ENCODE measurements at regions of chr9 and their contacts with region 1.

Region 1: DNA sequence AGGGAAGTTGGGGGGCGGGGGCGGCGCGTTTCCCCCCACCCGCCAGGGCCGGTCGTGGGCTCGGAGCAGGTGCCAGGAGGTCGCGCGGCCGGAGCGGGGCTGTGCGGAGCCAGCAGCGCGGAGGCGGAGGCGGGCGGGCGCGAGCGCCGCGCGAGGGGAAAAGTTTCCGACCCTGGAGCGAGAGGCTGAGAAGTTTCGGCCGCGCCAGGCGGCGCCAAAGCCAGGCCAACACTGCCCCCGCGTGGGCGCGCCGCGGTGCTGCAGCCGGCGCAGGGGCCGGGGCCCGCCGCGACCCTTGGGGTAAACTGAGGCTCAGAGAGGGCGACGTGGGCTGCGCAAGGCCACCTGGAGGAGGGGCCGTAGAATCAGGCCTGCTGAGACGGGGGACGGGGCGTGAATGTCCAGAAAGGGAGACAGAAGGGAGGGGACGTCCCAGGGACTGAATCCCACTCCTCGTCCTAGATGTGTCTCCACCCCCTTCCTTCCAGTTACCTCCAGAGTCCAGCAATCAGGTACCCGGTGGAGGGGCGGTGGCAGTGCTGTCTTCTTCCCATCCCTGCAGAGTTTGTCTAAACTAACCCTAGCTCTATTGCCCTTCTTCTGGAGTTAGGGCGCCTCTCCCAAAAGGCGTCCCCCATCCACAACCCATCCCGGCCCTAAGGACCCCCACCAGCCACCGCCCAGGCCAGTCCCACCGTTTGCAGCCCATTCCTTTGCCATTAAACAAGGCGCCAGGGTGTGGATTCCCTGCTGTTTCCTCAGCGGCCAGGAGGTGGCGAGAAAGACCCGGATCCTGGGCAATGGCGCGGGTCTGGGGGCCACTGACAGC is 10.2 kb downstream of the C9orf50 start:
- DNase-seq: peak; percentile 82 to 92 (median 84)
- ATAC-seq: peak in 3 of 4 donors; percentile 12 to 66 (median 54)
- H3K4me3 ChIP-seq: peak overlapping the region; percentile 44 to 74 (median 66)
- H3K27ac ChIP-seq: peak overlapping the region; percentile 29 to 98 (median 90)
- H3K4me1 ChIP-seq: peaks cover 0 to 47% (median 39%) of the 10 kb centered on the region in 12 donors
- H3K27me3 ChIP-seq: no peaks in the 10 kb centered on the region
- CTCF ChIP-seq: peak; percentile 66 to 98 (median 91)
- POLR2A ChIP-seq: peak in 1 of 2 donors; percentile 41

Region 2: GRCh38 chr9:129177791-129178559 is 432.7 kb before region 1 on chr9 and contains the start of gene IER5L:
- intact Hi-C with region 1: loop called in 9 of 10 experiments (anchors 1 to 10 kb)
- DNase-seq: peak; percentile 94 to 98 (median 97)
- ATAC-seq: peak; percentile 85 to 90 (median 89)
- H3K4me3 ChIP-seq: peak within 1 kb of the TSS; percentile 77 to 99 (median 95)
- H3K27ac ChIP-seq: peak within 1 kb of the TSS; percentile 81 to 100 (median 99)
- H3K4me1 ChIP-seq: peaks cover 3 to 43% (median 25%) of the 10 kb centered on the region in 12 donors
- H3K27me3 ChIP-seq: no peaks in the 10 kb centered on the region
- CTCF ChIP-seq: no peak
- POLR2A ChIP-seq: peak; percentile 90 to 99
- total RNA-seq, gene IER5L: 4.1 to 18.4 (median 5.5) TPM

Region 3: GRCh38 chr9:129383561-129384416 is 226.9 kb before region 1 on chr9:
- intact Hi-C with region 1: loop called in 3 of 10 experiments (anchors 5 to 10 kb)
- DNase-seq: peak; percentile 85 to 92 (median 87)
- ATAC-seq: peak; percentile 68 to 92 (median 89)
- H3K4me3 ChIP-seq: peak overlapping the region; percentile 15 to 78 (median 64)
- H3K27ac ChIP-seq: peak overlapping the region; percentile 90 to 98 (median 96)
- H3K4me1 ChIP-seq: peaks cover 0 to 25% (median 15%) of the 10 kb centered on the region in 12 donors
- H3K27me3 ChIP-seq: no peaks in the 10 kb centered on the region
- CTCF ChIP-seq: peak in 5 of 12 donors; percentile 26 to 47 (median 35)
- POLR2A ChIP-seq: peak in 1 of 2 donors; percentile 41

Region 4: DNA sequence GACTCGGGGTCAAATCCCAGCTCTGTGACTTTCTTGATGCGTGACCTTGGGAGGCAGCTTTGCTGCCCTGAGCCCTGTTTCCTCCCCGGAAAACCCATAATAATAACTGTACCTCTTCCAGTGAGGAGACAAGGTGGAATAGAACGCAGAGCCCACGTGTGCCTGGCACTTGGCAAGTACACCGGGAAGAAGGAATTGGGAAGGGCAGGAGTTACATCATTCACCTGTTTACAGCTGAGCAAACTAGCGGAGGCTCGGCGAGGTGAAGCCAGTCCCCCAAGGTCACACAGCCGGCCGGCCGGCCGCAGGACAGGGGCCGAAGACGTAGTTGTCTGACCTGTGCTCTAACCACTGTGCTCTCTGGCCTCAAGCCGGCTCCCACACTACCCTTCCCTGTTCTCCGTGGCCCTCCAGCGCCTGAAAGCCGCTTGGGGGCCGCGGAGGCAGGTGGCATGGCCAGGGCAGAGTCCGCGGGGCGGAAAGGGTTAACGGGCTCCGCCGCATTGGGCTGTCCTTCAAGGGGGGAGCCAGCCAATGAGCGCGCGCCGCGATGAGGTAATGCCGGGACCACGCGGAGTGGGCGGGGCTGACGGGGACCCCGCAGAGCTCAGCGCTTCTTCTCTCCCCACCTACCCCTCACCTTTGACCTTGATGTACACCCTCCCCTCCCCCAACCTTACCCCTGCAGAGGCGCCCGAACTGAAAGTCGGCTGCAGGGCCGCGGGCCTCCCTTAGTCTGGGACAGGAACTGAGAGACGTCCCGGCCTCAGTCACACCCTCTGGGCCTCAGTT is 115.0 kb before region 1 on chr9:
- intact Hi-C with region 1: loop called in 5 of 10 experiments (anchors 2 to 5 kb)
- DNase-seq: peak; percentile 96 to 98 (median 97)
- ATAC-seq: peak; percentile 84 to 89 (median 86)
- H3K4me3 ChIP-seq: peak overlapping the region; percentile 30 to 72 (median 62)
- H3K27ac ChIP-seq: peak overlapping the region; percentile 93 to 100 (median 98)
- H3K4me1 ChIP-seq: peaks cover 8 to 92% (median 65%) of the 10 kb centered on the region in 12 donors
- H3K27me3 ChIP-seq: no peaks in the 10 kb centered on the region
- CTCF ChIP-seq: no peak
- POLR2A ChIP-seq: peak in 1 of 2 donors; percentile 14

Region 5: DNA sequence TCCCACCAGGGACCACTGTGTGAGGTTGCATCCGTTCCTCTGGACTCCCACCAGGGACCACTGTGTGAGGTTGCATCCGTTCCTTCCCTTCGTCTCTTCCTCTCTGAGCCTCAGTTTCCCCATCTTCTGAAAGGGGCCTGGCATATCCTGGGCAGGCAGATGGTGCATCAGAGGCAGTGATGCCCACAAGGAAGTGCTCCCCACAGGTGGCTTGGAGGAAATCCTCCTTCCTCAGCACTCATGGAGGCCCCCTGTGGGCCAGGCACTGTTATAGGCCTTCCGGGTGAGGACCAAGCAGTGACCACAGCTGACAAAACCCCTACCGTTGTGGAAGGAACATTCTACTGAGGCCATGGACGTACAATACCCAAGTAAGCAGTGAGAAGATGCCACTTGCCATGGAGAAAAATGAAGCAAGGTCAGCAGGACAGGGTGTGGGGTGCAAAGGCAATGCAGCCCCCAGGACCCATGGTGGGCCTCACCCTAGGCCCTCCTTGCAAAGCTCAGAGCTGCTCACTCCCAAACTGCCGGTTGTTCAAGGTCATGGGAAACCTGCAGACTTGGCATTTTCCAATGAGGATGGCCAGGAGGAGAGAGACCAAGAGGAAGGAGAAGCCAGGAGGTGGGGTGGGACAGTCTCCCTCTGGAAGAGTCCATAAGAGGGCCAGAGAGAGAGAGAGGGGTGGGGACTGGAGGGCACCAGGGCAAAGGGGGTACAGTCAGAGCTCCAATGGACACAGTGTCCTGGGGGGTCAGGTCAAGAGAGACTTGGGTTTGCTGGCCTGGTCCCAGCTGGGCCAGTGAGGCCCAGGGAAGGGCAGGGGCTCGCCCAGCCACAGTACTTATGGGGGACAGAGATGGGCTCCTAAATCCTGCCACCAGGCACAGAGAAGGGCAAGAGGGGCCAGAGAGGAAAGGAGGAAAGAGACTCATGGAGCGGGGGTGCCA is 40.9 kb before region 1 on chr9:
- intact Hi-C with region 1: loop called in 1 of 10 experiments (anchors 2 kb)
- DNase-seq: no peak
- ATAC-seq: peak; percentile 25 to 52 (median 46)
- H3K4me3 ChIP-seq: peak overlapping the region in 9 of 12 donors; percentile 43 to 66 (median 57)
- H3K27ac ChIP-seq: peak overlapping the region in 11 of 12 donors; percentile 28 to 82 (median 72)
- H3K4me1 ChIP-seq: peaks cover 0 to 41% (median 28%) of the 10 kb centered on the region in 12 donors
- H3K27me3 ChIP-seq: peaks cover 0 to 17% (median 0%) of the 10 kb centered on the region in 9 donors
- CTCF ChIP-seq: peak in 10 of 12 donors; percentile 21 to 52 (median 36)
- POLR2A ChIP-seq: no peak

Region 6: DNA sequence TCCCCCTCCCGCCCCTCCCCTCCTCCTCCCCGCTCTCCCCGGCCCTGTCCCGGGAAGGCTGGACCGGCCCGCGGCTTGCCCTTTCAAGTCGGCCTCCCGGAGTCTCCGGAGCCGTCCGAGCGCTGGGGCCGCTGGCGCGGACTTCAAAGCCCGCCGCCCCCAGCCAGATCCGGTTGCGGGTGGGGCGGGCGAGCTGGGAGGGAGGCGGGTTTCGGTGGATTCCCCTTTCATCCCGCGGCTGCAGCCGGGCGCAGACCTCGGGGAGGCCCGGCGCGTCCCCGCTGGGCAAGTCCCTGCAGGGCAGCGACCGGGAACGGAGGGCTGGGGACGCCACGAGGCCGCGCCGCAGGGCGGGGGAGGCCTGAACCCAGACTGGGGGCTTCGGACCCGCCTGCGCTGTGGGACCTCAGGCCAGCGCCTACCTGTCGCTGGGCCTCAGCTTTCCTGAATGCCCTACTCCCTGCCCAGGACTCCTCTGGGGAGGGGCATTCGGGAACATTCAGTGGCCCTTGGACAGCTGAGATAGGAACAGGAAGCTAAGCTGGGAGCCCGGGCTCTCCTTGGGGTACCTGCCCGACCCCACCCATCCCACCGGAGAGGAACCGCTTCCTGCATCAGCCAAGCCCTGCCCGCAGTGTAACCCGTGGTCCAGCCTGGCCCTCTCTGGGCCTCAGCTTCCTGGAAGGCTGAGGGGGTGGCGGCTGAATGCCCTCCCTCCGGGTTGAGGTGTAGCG is 13.2 kb before region 1 on chr9:
- intact Hi-C with region 1: no loop called
- DNase-seq: peak; percentile 67 to 83 (median 72)
- ATAC-seq: peak; percentile 6 to 72 (median 68)
- H3K4me3 ChIP-seq: peak overlapping the region in 11 of 12 donors; percentile 30 to 62 (median 54)
- H3K27ac ChIP-seq: peak overlapping the region; percentile 35 to 93 (median 87)
- H3K4me1 ChIP-seq: peaks cover 0 to 37% (median 19%) of the 10 kb centered on the region in 12 donors
- H3K27me3 ChIP-seq: peaks cover 0 to 21% (median 0%) of the 10 kb centered on the region in 9 donors
- CTCF ChIP-seq: no peak
- POLR2A ChIP-seq: no peak